ENCODE measurements at regions of chr10 and their contacts with region 1.

Region 1: GRCh38 chr10:100009793-100010676 is at the start of gene DNMBP:
- DNase-seq: peak; percentile 86
- H3K4me3 ChIP-seq: peak within 1 kb of the TSS; percentile 92
- H3K27ac ChIP-seq: peak within 1 kb of the TSS; percentile 92
- H3K4me1 ChIP-seq: peaks cover 51% of the 10 kb centered on the region
- H3K27me3 ChIP-seq: no peaks in the 10 kb centered on the region
- CTCF ChIP-seq: peak; percentile 63
- total RNA-seq, gene DNMBP: 7.7 TPM

Region 2: GRCh38 chr10:99854860-99855259 is 155.2 kb before region 1 on chr10:
- intact Hi-C with region 1: loop called (anchors 10 kb)
- DNase-seq: no peak
- H3K4me3 ChIP-seq: no peak overlapping the region
- H3K27ac ChIP-seq: no peak overlapping the region
- H3K4me1 ChIP-seq: no peaks in the 10 kb centered on the region
- H3K27me3 ChIP-seq: no peaks in the 10 kb centered on the region
- CTCF ChIP-seq: peak; percentile 62

Region 3: GRCh38 chr10:100403734-100404133 is 393.7 kb after region 1 on chr10:
- intact Hi-C with region 1: no loop called
- DNase-seq: no peak
- H3K4me3 ChIP-seq: no peak overlapping the region
- H3K27ac ChIP-seq: no peak overlapping the region
- H3K4me1 ChIP-seq: no peaks in the 10 kb centered on the region
- H3K27me3 ChIP-seq: no peaks in the 10 kb centered on the region
- CTCF ChIP-seq: no peak